Caco-2 (cell line): ENCODE measurements at regions of chr3 and their contacts with region 1.

Region 1: GRCh38 chr3:35721628-35722027 is 82.3 kb downstream of the ARPP21 start:
- DNase-seq: no peak
- H3K4me3 ChIP-seq: no peak overlapping the region
- H3K4me3 Mint-ChIP-seq: no peak overlapping the region
- H3K27ac Mint-ChIP-seq: no peak overlapping the region
- H3K4me1 ChIP-seq: no peaks in the 10 kb centered on the region
- H3K4me1 Mint-ChIP-seq: no peaks in the 10 kb centered on the region
- H3K27me3 ChIP-seq: no peaks in the 10 kb centered on the region
- H3K27me3 Mint-ChIP-seq: peaks cover 2% of the 10 kb centered on the region
- CTCF ChIP-seq: no peak

Region 2: GRCh38 chr3:35744419-35744818 is 22.8 kb after region 1 on chr3:
- CTCF ChIA-PET with region 1: no interaction called
- POLR2A ChIA-PET with region 1: no interaction called
- intact Hi-C with region 1: loop called (anchors 1 kb)
- DNase-seq: no peak
- H3K4me3 ChIP-seq: no peak overlapping the region
- H3K4me3 Mint-ChIP-seq: no peak overlapping the region
- H3K27ac Mint-ChIP-seq: no peak overlapping the region
- H3K4me1 ChIP-seq: no peaks in the 10 kb centered on the region
- H3K4me1 Mint-ChIP-seq: no peaks in the 10 kb centered on the region
- H3K27me3 ChIP-seq: no peaks in the 10 kb centered on the region
- H3K27me3 Mint-ChIP-seq: peaks cover 7% of the 10 kb centered on the region
- CTCF ChIP-seq: no peak